ENCODE measurements at regions of chr4 and their contacts with region 1.

Region 1: GRCh38 chr4:13654158-13654797 is 26.8 kb upstream of the BOD1L1 start:
- DNase-seq: peak; percentile 80 to 97 (median 90)

Region 2: GRCh38 chr4:13476915-13477314 is 177.4 kb before region 1 on chr4:
- intact Hi-C with region 1: no loop called
- DNase-seq: no peak

Region 3: DNA sequence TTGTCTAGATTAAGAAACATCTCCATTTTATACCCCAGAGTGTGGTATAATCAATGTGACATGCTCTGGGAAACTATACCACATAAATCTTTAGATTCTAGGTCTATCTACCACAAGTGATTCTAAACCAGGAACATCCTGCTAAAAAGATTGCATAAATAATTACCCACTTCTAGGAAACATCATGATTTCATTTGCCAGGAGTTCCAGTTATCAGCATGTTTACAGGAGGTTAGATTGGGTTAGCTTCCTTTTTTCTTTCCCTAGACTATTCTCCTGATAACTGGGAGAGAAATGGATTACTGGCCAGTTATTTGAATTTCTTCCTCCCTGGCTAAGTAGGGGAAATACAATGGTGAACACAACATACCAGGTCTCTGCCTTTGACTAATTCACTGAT is 203.5 kb after region 1 on chr4:
- intact Hi-C with region 1: loop called (anchors 5 kb)
- DNase-seq: no peak